IMR-90 (cell line): ENCODE measurements at regions of chr1 and their contacts with region 1.

Region 1: DNA sequence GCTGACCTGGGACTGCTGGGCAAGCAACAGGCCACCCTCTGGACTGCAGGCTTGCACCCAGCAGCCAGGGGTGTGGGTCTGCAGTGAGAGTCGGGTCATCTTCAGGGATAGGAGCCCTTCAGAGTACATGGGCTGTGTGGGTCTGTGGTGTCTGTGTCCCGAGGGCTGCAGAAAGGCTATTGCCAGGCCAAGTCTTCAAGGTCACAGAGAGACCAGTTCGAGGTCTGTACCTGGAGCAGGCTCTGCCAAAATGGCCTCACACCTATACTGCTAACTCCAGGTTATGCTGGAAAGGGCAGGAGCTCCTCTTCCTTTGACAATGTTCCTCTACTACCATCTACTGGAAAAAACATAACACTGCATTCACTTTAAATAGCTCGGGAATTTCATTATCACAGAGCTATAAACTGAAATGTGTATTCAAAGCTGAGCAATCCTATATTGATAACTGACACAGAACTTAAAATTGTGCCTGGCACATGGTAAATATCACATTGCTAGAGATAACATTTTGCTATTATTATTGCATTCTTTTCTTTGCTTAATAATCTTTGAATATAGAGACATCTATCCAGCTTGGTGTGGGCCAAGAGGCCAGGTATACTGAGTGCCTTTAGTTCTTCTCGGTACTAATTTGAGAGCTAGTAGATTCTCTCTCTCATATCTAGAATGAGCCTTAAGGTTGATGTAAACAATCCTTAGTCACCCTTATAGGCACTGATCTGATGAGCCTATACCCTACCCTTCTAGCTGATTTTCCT is 6.9 kb upstream of the DNAH14 start:
- DNase-seq: peak; percentile 39
- ATAC-seq: peak; percentile 97
- H3K4me3 ChIP-seq: no peak overlapping the region
- H3K27ac ChIP-seq: no peak overlapping the region
- H3K4me1 ChIP-seq: no peaks in the 10 kb centered on the region
- H3K27me3 ChIP-seq: no peaks in the 10 kb centered on the region
- CTCF ChIP-seq: peak; percentile 79
- POLR2A ChIP-seq: no peak
- RAD21 ChIP-seq: peak; percentile 79

Region 2: GRCh38 chr1:224329842-224330753 is 592.5 kb before region 1 on chr1 and contains the start of gene NVL:
- CTCF ChIA-PET with region 1: no interaction called
- POLR2A ChIA-PET with region 1: no interaction called
- dilution Hi-C with region 1: no loop called
- in situ Hi-C with region 1: no loop called
- intact Hi-C with region 1: loop called (anchors 5 kb)
- DNase-seq: peak; percentile 86
- ATAC-seq: peak; percentile 96
- H3K4me3 ChIP-seq: peak within 1 kb of the TSS; percentile 70
- H3K27ac ChIP-seq: peak within 1 kb of the TSS; percentile 95
- H3K4me1 ChIP-seq: no peaks in the 10 kb centered on the region; the same call in 1 of the 2 replicates
- H3K27me3 ChIP-seq: no peaks in the 10 kb centered on the region
- CTCF ChIP-seq: no peak
- POLR2A ChIP-seq: peak; percentile 58
- RAD21 ChIP-seq: no peak
- total RNA-seq, gene NVL: 16.5 and 18.9 TPM in 2 replicates

Region 3: GRCh38 chr1:224447251-224447650 is 475.3 kb before region 1 on chr1:
- CTCF ChIA-PET with region 1: no interaction called
- POLR2A ChIA-PET with region 1: no interaction called
- dilution Hi-C with region 1: no loop called
- in situ Hi-C with region 1: no loop called
- intact Hi-C with region 1: no loop called
- DNase-seq: peak; percentile 69
- ATAC-seq: peak; percentile 93
- H3K4me3 ChIP-seq: no peak overlapping the region
- H3K27ac ChIP-seq: no peak overlapping the region
- H3K4me1 ChIP-seq: no peaks in the 10 kb centered on the region
- H3K27me3 ChIP-seq: no peaks in the 10 kb centered on the region
- CTCF ChIP-seq: no peak
- POLR2A ChIP-seq: no peak
- RAD21 ChIP-seq: no peak

Region 4: GRCh38 chr1:224513787-224514209 is 408.8 kb before region 1 on chr1:
- CTCF ChIA-PET with region 1: interaction called, 9 read pairs
- POLR2A ChIA-PET with region 1: no interaction called
- dilution Hi-C with region 1: no loop called
- in situ Hi-C with region 1: loop called (anchors 5 kb)
- intact Hi-C with region 1: loop called (anchors 1 kb)
- DNase-seq: peak; percentile 74
- ATAC-seq: peak; percentile 82
- H3K4me3 ChIP-seq: no peak overlapping the region
- H3K27ac ChIP-seq: no peak overlapping the region
- H3K4me1 ChIP-seq: peaks cover 15% of the 10 kb centered on the region
- H3K27me3 ChIP-seq: no peaks in the 10 kb centered on the region
- CTCF ChIP-seq: peak; percentile 98
- POLR2A ChIP-seq: peak; percentile 53; the same call in 1 of the 2 replicates
- RAD21 ChIP-seq: peak; percentile 99

Region 5: GRCh38 chr1:224747578-224747977 is 175.0 kb before region 1 on chr1:
- CTCF ChIA-PET with region 1: no interaction called
- POLR2A ChIA-PET with region 1: no interaction called
- dilution Hi-C with region 1: no loop called
- in situ Hi-C with region 1: no loop called
- intact Hi-C with region 1: no loop called
- DNase-seq: peak; percentile 29
- ATAC-seq: no peak
- H3K4me3 ChIP-seq: no peak overlapping the region
- H3K27ac ChIP-seq: no peak overlapping the region
- H3K4me1 ChIP-seq: no peaks in the 10 kb centered on the region
- H3K27me3 ChIP-seq: no peaks in the 10 kb centered on the region
- CTCF ChIP-seq: no peak
- POLR2A ChIP-seq: no peak
- RAD21 ChIP-seq: no peak

Region 6: GRCh38 chr1:224851210-224851847 is 71.3 kb before region 1 on chr1:
- CTCF ChIA-PET with region 1: interaction called, 5 read pairs
- POLR2A ChIA-PET with region 1: no interaction called
- dilution Hi-C with region 1: no loop called
- in situ Hi-C with region 1: no loop called
- intact Hi-C with region 1: loop called (anchors 5 kb)
- DNase-seq: peak; percentile 37
- ATAC-seq: peak; percentile 70
- H3K4me3 ChIP-seq: no peak overlapping the region
- H3K27ac ChIP-seq: no peak overlapping the region
- H3K4me1 ChIP-seq: no peaks in the 10 kb centered on the region
- H3K27me3 ChIP-seq: peaks cover 2% of the 10 kb centered on the region; the same call in 1 of the 2 replicates
- CTCF ChIP-seq: peak; percentile 64
- POLR2A ChIP-seq: no peak
- RAD21 ChIP-seq: peak; percentile 67

Region 7: DNA sequence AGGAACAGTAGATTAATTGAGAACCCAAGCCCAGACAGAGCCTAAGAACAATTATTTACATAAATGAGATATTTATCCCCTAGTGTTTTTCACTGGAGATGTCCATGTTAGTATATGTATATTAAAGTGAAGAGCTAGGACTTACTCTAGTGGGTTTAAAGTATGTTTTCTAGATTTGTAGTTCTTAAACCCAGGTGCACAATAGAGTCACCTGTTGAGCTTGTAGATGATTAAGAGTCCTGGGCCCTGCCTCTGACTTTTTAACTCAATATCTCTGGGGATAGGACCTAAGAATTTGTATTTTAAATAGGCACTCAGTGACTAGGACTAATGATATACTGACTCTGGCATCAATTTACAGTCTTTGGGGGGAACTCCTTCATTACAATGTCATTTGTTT is 119.7 kb after region 1 on chr1:
- CTCF ChIA-PET with region 1: no interaction called
- POLR2A ChIA-PET with region 1: no interaction called
- dilution Hi-C with region 1: no loop called
- in situ Hi-C with region 1: no loop called
- intact Hi-C with region 1: no loop called
- DNase-seq: no peak
- ATAC-seq: no peak
- H3K4me3 ChIP-seq: no peak overlapping the region
- H3K27ac ChIP-seq: no peak overlapping the region
- H3K4me1 ChIP-seq: no peaks in the 10 kb centered on the region
- H3K27me3 ChIP-seq: no peaks in the 10 kb centered on the region
- CTCF ChIP-seq: no peak
- POLR2A ChIP-seq: no peak
- RAD21 ChIP-seq: no peak